Endothelial cell of umbilical vein (primary cell): ENCODE measurements at regions of chr10 and their contacts with region 1.

Region 1: DNA sequence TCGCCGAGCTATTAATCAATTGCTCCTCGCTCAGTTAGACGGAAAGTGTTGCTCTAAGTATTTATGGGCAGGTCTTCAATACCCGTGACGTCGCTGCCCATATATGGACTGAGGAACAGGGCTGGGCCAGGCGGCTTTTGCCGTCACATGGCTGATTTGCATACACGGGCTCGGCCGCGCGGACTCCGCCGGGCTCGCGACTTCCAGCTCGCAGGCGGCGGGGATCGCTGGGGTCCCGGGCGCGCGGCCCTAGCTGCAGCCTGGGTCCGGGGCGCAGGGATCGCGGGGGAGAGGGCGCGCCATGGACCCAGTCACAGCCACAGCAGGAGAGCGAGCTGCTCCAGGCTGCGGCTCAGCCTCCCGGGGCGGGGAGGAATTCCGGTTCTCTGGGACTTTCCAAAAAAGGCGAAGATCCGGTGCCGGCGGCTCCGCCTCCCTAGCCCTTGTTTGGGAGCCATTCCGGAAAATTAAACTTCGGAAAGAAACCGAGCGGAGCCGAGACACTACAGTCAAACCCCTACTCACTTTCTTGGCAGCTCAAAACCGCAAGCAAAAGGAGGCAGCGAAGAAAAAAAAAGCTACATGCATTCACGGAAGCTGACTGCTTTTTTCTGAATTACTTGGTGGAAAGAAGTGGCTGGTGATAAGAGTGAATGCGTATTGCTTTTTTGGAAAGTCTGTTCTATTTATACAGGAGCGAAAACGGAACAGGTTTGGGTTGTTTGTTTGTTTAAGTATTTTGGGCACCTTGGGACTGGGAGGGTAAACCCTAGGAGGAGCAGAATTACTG is at the start of gene EGR2:
- DNase-seq: peak; percentile 91
- H3K4me3 ChIP-seq: peak within 1 kb of the TSS; percentile 45 to 91 (median 51)
- H3K27ac ChIP-seq: peak within 1 kb of the TSS; percentile 32
- H3K4me1 ChIP-seq: peaks cover 24% of the 10 kb centered on the region
- H3K27me3 ChIP-seq: peaks cover 50 to 60% of the 10 kb centered on the region in 2 experiments
- CTCF ChIP-seq: no peak
- POLR2A ChIP-seq: no peak
- total RNA-seq, gene EGR2: 0.46 and 0.67 TPM in 2 replicates

Region 2: GRCh38 chr10:62437696-62438095 is 378.8 kb before region 1 on chr10:
- CTCF ChIA-PET with region 1: interaction called, 12 read pairs
- POLR2A ChIA-PET with region 1: no interaction called
- dilution Hi-C with region 1: no loop called
- intact Hi-C with region 1: loop called (anchors 2 kb)
- DNase-seq: peak; percentile 73
- H3K4me3 ChIP-seq: no peak overlapping the region
- H3K27ac ChIP-seq: no peak overlapping the region
- H3K4me1 ChIP-seq: peaks cover 14% of the 10 kb centered on the region
- H3K27me3 ChIP-seq: no peaks in the 10 kb centered on the region
- CTCF ChIP-seq: peak; percentile 54 to 58
- POLR2A ChIP-seq: no peak

Region 3: GRCh38 chr10:62594093-62594520 is 222.4 kb before region 1 on chr10:
- CTCF ChIA-PET with region 1: interaction called, 79 read pairs
- POLR2A ChIA-PET with region 1: no interaction called
- dilution Hi-C with region 1: no loop called
- intact Hi-C with region 1: loop called (anchors 1 kb)
- DNase-seq: peak; percentile 51
- H3K4me3 ChIP-seq: no peak overlapping the region
- H3K27ac ChIP-seq: no peak overlapping the region
- H3K4me1 ChIP-seq: peaks cover 7% of the 10 kb centered on the region
- H3K27me3 ChIP-seq: peaks cover 0 to 2% of the 10 kb centered on the region in 2 experiments
- CTCF ChIP-seq: peak; percentile 74 to 81
- POLR2A ChIP-seq: no peak

Region 4: DNA sequence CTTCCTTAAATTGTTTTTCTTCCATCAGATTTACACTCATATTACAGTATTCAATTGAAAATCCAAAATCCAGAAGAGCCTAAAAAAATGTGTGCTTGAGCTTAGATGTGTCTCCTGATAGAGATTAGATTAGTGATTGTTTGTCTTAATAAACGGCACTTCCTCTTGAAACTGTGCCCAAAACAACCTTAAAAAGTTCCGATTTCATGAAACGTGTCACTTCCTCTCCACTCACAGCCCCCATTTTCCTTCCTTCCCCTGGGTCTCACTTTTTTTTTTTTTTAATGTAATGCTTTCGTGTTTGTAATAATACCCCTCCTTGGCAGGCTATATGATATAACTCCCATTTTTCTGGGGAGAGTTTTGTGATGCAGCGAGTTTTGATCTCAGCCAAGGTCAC is 126.8 kb before region 1 on chr10:
- CTCF ChIA-PET with region 1: interaction called, 3 read pairs
- POLR2A ChIA-PET with region 1: no interaction called
- dilution Hi-C with region 1: no loop called
- intact Hi-C with region 1: loop called (anchors 5 kb)
- DNase-seq: peak; percentile 73
- H3K4me3 ChIP-seq: no peak overlapping the region
- H3K27ac ChIP-seq: peak overlapping the region; percentile 39
- H3K4me1 ChIP-seq: peaks cover 22% of the 10 kb centered on the region
- H3K27me3 ChIP-seq: no peaks in the 10 kb centered on the region
- CTCF ChIP-seq: no peak
- POLR2A ChIP-seq: no peak

Region 5: DNA sequence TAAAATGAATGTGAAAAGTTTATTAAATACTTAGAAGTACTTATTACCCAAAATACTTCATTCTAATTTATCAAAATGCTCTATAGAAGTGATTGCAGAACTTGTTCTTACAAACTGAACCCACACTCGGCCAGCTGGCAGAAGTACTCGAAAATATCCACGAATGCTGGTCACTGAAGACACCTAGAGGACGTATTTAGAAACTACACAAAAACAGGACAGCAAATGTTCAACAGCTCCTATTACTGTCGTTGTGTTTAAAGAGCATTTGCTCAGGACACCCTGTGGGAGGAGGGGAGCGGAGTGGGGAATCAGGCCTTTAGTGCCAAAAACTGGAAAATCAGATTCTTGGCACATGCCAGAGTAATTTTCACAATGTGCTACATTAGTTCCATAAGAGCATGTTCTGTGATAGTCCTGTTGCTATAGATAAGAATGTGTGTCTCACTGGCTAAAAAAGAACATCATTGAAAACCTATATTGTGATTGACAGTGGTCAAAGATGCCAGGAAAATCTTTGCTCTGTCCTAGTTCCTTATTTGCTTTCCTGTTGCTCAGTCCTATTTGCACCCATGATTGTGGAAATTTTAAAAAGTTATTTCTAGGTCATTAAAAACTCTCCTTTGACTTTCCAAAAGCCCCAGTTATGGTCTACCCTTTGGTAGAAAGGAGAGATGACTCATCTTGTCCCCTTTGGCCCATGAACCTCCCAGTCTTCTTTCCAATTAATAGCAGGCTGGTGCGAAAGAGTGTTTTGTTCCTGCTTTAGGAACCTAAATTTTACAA is 267.6 kb after region 1 on chr10:
- CTCF ChIA-PET with region 1: interaction called, 19 read pairs
- POLR2A ChIA-PET with region 1: no interaction called
- dilution Hi-C with region 1: no loop called
- intact Hi-C with region 1: no loop called
- DNase-seq: peak; percentile 67
- H3K4me3 ChIP-seq: no peak overlapping the region
- H3K27ac ChIP-seq: no peak overlapping the region
- H3K4me1 ChIP-seq: no peaks in the 10 kb centered on the region
- H3K27me3 ChIP-seq: no peaks in the 10 kb centered on the region
- CTCF ChIP-seq: peak; percentile 31 to 46
- POLR2A ChIP-seq: no peak